ENCODE measurements at regions of chr6 and their contacts with region 1.

Region 1: DNA sequence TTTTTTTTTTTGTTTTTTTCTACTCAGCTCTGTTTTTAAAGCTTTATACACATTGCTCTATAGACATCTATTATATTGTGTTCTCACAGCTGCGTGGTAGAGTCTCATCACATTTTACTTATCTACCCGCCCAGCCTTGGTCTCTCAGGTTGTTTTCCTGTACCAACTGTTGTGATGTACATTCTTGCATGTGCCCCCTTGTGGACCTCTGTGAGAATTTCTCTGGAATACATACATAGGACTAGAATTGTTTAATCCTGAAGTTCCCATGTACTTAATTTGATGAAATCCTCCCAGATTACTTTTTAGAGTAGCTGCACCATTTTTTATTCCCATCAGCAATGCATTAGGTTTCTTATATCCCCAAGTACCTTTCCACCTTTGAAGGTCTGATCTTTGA is 40.4 kb upstream of the TINAG start:
- DNase-seq: peak; percentile 46
- H3K4me3 ChIP-seq: no peak overlapping the region
- H3K27ac ChIP-seq: no peak overlapping the region
- H3K4me1 ChIP-seq: no peaks in the 10 kb centered on the region
- H3K27me3 ChIP-seq: no peaks in the 10 kb centered on the region
- CTCF ChIP-seq: peak; percentile 35

Region 2: GRCh38 chr6:53926525-53926924 is 341.3 kb before region 1 on chr6:
- intact Hi-C with region 1: no loop called
- DNase-seq: no peak
- H3K4me3 ChIP-seq: no peak overlapping the region
- H3K27ac ChIP-seq: no peak overlapping the region
- H3K4me1 ChIP-seq: peaks cover 13% of the 10 kb centered on the region
- H3K27me3 ChIP-seq: no peaks in the 10 kb centered on the region
- CTCF ChIP-seq: no peak

Region 3: DNA sequence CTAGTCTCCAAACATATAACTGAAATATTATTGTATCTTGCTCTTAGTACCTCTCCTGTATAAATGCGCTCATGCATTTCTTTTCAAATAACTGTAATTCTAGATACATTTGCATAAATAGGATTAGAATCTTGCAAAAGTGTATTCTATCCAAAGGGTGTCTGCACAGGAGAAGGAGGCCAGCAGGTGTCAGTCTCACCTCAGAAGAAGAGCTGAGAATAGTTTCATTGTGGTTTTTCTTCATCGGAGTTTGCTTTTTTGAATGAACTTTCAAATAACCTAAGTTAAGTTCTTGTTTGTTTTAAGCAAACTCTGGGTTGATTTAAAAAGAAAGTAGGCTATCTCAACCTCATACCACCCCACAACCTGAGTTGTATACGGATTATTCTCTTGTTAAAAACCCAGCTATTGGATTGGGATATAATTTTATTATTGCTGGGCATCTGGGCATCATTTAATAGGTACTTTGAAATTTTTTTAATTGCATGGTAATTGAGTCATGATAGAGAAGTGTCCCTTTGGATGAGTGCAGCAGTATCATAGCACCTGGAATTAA is 281.6 kb before region 1 on chr6:
- intact Hi-C with region 1: loop called (anchors 2 kb)
- DNase-seq: peak; percentile 49
- H3K4me3 ChIP-seq: no peak overlapping the region
- H3K27ac ChIP-seq: no peak overlapping the region
- H3K4me1 ChIP-seq: no peaks in the 10 kb centered on the region
- H3K27me3 ChIP-seq: no peaks in the 10 kb centered on the region
- CTCF ChIP-seq: peak; percentile 85